CD4-positive, alpha-beta T cell (primary cell): ENCODE measurements at regions of chr17 and their contacts with region 1.

Region 1: DNA sequence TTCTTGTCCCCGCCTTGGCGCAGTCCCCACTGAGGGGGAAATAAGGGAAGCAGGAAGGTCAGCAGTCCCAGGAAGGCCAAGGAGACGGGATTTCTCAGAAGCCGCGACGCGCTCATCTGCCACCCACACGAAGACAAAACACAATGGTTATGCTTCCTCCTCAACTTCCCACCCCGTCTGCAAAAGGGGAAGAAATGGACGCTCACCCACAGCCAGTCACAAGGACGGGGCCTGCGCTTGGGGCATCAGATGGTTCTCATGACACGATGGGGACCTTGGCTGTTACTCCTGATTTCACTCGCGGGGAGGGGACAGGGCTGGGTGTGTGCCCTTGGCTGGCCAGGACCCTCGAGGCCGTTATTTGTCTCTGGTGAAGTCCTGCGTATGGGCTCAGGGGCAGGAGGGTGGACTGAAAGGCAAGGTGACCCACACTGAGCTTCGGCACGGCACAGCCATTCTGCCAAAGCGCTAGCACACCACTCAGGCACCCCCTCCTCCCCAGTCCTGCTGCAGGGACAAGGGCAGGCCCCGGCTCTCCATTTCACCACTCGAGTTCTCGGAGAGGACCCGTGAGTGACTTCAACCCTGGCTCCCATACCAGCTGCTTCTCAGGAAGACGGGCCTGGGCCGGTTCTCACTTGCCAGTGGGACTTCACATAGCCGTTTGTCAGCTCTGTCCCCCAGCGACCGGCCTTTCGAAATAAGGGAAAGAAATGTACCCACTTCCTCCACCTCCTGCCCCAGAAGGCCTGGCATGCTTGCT is 84.5 kb downstream of the ABR start:
- DNase-seq: peak in 2 of 14 experiments; percentile 60 to 68
- ATAC-seq: no peak
- H3K4me3 ChIP-seq: no peak overlapping the region
- H3K4me3 Mint-ChIP-seq: no peak overlapping the region
- H3K27ac ChIP-seq: peak overlapping the region in 1 of 2 donors; percentile 40
- H3K27ac Mint-ChIP-seq: no peak overlapping the region
- H3K4me1 ChIP-seq: peaks cover 29% of the 10 kb centered on the region
- H3K4me1 Mint-ChIP-seq: peaks cover 36% of the 10 kb centered on the region
- H3K27me3 ChIP-seq: no peaks in the 10 kb centered on the region
- H3K27me3 Mint-ChIP-seq: no peaks in the 10 kb centered on the region
- CTCF ChIP-seq: no peak

Region 2: DNA sequence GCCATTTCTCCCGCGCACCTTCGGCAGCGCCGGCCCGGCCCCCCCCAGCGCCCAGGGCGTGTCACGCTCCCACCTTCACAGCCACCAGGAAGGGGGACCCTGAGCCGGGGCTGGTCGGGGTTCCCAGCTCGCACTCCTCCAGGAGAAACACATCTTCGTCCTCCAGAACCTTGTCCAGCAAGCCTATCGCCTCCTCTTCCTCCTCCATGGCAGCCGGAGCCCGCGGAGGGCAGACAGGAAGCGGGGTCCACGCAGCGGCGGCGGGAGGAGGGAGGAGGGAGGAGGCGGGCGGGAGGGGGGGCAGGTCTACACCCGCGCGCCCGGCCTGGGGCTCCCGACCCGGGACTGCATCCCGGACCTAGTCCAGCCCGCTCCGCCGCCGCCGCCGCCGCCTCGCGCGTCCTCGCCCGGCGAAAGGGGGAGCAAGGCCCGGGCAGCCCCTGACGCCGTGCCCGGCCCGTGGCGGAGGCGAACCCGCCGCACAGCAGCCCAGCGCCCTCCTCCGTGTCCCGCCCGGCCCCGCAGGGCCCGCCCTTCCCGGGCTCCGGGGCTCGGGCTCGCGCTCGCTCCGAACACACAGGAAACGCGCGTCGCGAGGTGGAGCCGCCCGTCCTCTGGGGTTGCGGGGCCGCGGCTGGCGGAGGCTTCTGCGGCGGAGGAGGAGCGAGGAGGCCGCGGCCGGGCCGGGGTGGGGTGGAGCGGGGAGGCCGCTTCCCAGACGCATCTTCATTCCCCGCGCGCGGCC is 13.8 kb after region 1 on chr17:
- CTCF ChIA-PET with region 1: no interaction called
- POLR2A ChIA-PET with region 1: interaction called, 12 read pairs
- intact Hi-C with region 1: no loop called
- DNase-seq: peak; percentile 49 to 89 (median 72)
- ATAC-seq: peak; percentile 85
- H3K4me3 ChIP-seq: peak overlapping the region; percentile 73
- H3K4me3 Mint-ChIP-seq: peak overlapping the region; percentile 88
- H3K27ac ChIP-seq: peak overlapping the region; percentile 69 to 78
- H3K27ac Mint-ChIP-seq: peak overlapping the region; percentile 84
- H3K4me1 ChIP-seq: peaks cover 46% of the 10 kb centered on the region
- H3K4me1 Mint-ChIP-seq: peaks cover 44% of the 10 kb centered on the region
- H3K27me3 ChIP-seq: no peaks in the 10 kb centered on the region
- H3K27me3 Mint-ChIP-seq: no peaks in the 10 kb centered on the region
- CTCF ChIP-seq: no peak